Testis (tissue), 5 donors: ENCODE measurements at regions of chr17 and their contacts with region 1.

Region 1: DNA sequence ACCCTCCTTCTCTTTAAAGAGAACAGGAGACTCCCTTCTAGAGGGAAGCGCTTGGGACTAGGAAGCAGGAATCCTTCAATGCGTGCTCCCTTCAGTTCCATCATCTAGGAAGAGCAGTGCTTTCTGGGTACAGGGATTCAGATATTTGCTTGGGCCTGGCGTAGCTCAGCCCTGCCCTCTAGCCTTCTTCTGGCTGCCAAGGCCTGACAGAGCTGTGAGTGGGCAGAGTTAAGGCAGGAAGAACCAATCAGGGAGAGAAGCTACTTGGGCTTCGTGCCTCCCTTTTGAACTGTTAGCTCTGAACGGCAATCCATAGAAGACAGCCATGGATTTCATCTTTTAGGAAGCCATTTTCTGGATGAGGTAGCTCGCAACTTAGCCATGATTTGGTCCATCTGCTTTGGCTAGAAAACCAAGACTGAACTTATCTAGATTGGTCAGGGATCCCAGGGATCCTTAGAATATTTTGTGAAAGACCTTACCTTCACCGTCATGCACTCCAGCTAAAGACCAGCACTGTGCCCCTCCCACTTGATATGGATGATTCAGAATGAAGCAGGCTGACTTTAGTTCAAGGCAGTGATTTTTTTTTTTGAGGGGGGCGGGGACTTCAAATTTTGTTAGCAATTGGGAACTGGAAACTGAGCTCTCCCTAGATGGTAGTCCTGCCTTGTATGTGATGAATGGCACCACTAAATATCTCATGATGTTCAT is 2.5 kb upstream of the CORO6 start:
- DNase-seq: no peak
- H3K4me3 ChIP-seq: no peak overlapping the region
- H3K27ac ChIP-seq: no peak overlapping the region
- H3K4me1 ChIP-seq: no peaks in the 10 kb centered on the region
- H3K27me3 ChIP-seq: no peaks in the 10 kb centered on the region
- CTCF ChIP-seq: no peak
- POLR2A ChIP-seq: no peak

Region 2: DNA sequence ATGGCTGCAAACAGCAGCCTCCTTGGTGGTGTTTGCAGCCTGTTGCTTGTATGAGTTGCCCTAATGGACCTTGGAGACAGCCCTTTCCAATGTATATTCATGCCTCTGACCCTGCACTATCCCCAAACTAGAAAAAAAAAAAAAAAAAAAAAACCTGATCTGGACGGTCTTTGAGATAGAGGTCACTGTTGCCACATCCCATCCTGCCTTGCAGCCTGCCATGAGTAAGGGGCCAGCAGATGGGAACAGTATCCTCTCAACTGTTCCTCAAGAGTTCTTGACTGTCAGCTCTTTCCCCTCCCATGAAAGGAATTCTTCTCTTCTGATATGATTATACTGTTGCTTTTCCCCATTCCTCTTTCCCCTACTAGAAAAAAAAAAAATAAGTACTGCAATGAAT is 152.5 kb after region 1 on chr17:
- intact Hi-C with region 1: loop called (anchors 5 kb)
- DNase-seq: no peak
- H3K4me3 ChIP-seq: no peak overlapping the region
- H3K27ac ChIP-seq: no peak overlapping the region
- H3K4me1 ChIP-seq: no peaks in the 10 kb centered on the region
- H3K27me3 ChIP-seq: no peaks in the 10 kb centered on the region
- CTCF ChIP-seq: no peak
- POLR2A ChIP-seq: no peak